ENCODE measurements at regions of chr6 and their contacts with region 1.

Region 1: GRCh38 chr6:11496152-11497060 is 41.1 kb upstream of the TMEM170B start:
- DNase-seq: peak; percentile 73
- H3K4me3 Mint-ChIP-seq: no peak overlapping the region
- H3K27ac Mint-ChIP-seq: no peak overlapping the region
- H3K4me1 Mint-ChIP-seq: no peaks in the 10 kb centered on the region
- H3K27me3 Mint-ChIP-seq: no peaks in the 10 kb centered on the region
- CTCF ChIP-seq: peak; percentile 60

Region 2: DNA sequence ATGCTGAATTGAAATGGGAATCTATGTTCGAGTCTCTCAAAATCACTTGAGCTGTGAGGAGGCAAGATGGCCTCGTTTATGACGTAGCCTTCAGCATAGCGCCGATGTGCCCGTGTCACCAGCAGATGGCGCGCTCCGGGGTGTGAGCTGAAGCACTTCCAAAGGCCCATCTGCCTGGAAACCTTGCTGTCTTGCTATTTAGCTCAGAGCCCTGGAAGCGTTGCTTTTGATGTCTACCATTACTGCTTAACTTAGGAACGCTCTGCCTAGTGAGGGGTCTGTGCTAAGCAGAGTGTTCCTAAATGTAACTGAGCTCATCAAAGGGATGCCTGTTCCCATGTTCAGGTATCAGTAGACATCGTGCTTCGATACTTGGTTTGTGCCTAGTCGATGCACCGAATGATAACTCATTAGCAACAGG is 541.8 kb before region 1 on chr6:
- CTCF ChIA-PET with region 1: interaction called, 4 read pairs
- intact Hi-C with region 1: loop called (anchors 1 kb)
- DNase-seq: peak; percentile 81
- H3K4me3 Mint-ChIP-seq: no peak overlapping the region
- H3K27ac Mint-ChIP-seq: no peak overlapping the region
- H3K4me1 Mint-ChIP-seq: peaks cover 10% of the 10 kb centered on the region
- H3K27me3 Mint-ChIP-seq: no peaks in the 10 kb centered on the region
- CTCF ChIP-seq: peak; percentile 58

Region 3: GRCh38 chr6:11144393-11144851 is 352.0 kb before region 1 on chr6:
- CTCF ChIA-PET with region 1: interaction called, 4 read pairs
- intact Hi-C with region 1: loop called (anchors 1 kb)
- DNase-seq: peak; percentile 79
- H3K4me3 Mint-ChIP-seq: no peak overlapping the region
- H3K27ac Mint-ChIP-seq: peak overlapping the region; percentile 95
- H3K4me1 Mint-ChIP-seq: peaks cover 34% of the 10 kb centered on the region
- H3K27me3 Mint-ChIP-seq: no peaks in the 10 kb centered on the region
- CTCF ChIP-seq: peak; percentile 64

Region 4: DNA sequence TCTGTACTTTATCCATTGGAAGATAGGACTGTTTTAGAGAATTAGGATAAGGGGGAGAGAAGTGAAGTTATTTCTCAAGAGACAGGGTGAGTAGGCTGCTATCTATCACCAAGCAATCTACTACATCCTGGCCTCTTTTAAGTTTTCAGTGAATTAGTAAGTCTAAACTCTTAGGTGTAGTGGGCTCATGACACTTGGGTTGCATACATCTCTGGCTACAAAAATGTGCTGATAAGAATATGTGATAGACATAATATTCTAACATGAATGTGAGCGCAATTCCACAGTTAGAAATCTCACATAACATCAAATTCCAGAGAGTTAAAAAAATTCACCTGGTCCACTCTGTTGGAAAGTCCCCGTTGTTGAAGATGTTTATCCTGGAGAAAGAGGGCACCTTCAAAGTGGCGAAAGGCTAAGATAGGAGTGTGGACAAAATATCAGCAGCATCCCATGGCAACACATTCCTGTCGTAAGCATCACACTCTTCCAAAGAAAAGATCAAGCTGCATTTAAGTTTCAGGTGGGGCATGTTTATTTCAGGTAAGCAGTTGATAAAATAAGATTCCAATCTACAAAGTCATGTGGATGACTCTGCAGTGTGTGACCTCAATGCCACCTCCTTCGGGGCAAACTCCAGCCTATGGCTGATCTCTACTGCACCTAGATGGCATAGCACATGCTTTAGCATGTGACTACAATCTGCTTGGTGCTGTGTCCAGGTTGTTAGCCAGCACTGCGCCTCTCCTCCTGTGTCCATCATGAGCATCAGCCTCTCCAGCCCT is 152.3 kb before region 1 on chr6:
- CTCF ChIA-PET with region 1: no interaction called
- intact Hi-C with region 1: loop called (anchors 5 kb)
- DNase-seq: peak; percentile 64
- H3K4me3 Mint-ChIP-seq: no peak overlapping the region
- H3K27ac Mint-ChIP-seq: peak overlapping the region; percentile 87
- H3K4me1 Mint-ChIP-seq: peaks cover 37% of the 10 kb centered on the region
- H3K27me3 Mint-ChIP-seq: no peaks in the 10 kb centered on the region
- CTCF ChIP-seq: no peak

Region 5: GRCh38 chr6:11460001-11460668 is 36.3 kb before region 1 on chr6:
- CTCF ChIA-PET with region 1: no interaction called
- intact Hi-C with region 1: no loop called
- DNase-seq: peak; percentile 2
- H3K4me3 Mint-ChIP-seq: no peak overlapping the region
- H3K27ac Mint-ChIP-seq: no peak overlapping the region
- H3K4me1 Mint-ChIP-seq: no peaks in the 10 kb centered on the region
- H3K27me3 Mint-ChIP-seq: no peaks in the 10 kb centered on the region
- CTCF ChIP-seq: no peak

Region 6: GRCh38 chr6:11575408-11576033 is 79.1 kb after region 1 on chr6:
- CTCF ChIA-PET with region 1: no interaction called
- intact Hi-C with region 1: loop called (anchors 5 kb)
- DNase-seq: peak; percentile 55
- H3K4me3 Mint-ChIP-seq: no peak overlapping the region
- H3K27ac Mint-ChIP-seq: no peak overlapping the region
- H3K4me1 Mint-ChIP-seq: no peaks in the 10 kb centered on the region
- H3K27me3 Mint-ChIP-seq: no peaks in the 10 kb centered on the region
- CTCF ChIP-seq: peak; percentile 70

Measured in Calu3 (cell line).